ENCODE measurements at regions of chr2 and their contacts with region 1.

Region 1: GRCh38 chr2:100580367-100581276 is 17.8 kb downstream of the PDCL3 start:
- DNase-seq: peak; percentile 50
- H3K4me3 Mint-ChIP-seq: peak overlapping the region; percentile 66
- H3K27ac Mint-ChIP-seq: peak overlapping the region; percentile 91
- H3K4me1 Mint-ChIP-seq: peaks cover 44% of the 10 kb centered on the region
- H3K27me3 Mint-ChIP-seq: no peaks in the 10 kb centered on the region

Region 2: DNA sequence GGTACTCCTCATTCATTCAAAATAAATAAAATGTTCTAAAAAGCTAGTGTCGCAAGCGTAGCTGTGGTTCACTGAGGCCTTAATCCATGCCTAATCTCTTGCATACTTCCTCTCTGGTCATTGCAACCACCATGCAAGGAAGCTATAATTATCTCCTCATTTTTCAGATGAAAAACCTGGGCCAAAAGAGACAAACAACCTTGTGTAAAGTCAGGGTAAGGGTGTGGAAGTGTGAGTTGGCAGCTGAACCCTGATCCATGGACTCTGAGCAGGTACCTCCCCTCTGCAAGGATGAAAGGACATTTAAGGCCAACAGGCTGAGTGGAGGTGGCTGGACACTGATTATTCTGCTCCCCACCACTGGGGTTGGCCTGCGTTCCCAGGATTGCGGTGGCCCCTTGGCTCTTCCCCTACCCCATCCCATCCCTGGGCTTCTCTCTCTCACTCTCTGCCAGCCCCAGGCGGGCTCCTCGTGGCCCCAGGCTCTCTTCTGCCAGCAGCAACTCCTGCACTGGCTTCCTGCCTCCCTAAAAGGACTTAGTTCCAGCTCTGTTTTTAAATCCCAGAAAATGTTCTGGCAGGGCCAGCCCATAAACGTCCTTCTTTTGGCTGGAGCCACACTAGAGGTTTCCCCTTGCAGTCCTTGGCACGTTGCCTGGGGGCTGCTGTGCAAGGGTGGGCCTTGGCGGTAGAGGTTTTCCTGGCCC is 366.2 kb before region 1 on chr2:
- intact Hi-C with region 1: no loop called
- DNase-seq: no peak
- H3K4me3 Mint-ChIP-seq: no peak overlapping the region
- H3K27ac Mint-ChIP-seq: no peak overlapping the region
- H3K4me1 Mint-ChIP-seq: no peaks in the 10 kb centered on the region
- H3K27me3 Mint-ChIP-seq: peaks cover 5% of the 10 kb centered on the region

Region 3: DNA sequence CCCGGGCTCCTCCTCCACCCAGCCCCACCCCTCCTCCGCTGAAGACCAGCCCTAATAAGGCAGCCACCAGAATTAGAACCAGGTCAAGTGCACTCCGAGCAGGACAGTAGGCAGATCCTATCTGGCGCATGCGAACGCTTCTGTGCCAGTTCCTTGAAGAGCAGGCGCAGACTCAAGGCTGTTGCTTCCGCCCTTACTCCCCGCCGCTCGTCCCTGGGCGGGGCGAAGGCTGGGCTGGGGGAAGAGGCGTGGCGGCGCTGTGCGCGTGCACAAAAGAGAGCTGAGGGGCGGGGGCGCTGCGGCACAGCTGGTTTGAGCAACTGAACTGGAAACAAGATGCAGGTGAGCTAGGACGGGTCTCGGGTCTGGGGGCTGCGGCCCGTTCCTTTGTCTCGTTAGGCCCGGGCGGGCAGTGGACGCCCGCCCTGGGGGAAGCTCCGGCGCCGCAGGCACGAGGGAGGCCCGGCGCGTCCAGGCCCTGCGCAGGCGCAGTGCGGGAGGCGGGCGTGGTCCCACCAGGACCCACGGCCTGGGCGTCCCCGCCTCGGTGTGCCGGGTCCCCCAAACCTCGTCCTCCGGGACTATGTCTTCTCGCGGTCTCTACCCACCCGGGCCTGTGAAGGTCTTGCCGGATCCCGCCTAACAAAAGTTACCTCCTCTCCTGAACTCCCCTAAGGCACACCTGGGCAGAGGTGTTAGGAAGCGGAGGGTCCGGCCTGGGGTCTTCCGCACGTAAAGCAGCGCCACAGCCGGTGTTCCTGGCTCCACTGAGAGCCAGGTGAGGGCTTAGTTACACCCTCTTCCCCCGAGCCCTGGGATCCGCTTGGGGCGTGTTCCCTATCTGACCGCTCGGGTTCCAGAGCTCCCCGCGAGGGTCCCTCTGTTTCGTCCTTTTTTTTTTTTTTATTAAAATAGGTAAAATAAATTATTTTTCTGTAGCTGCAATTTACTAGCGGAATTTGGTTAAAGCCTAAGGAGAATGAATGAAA is 17.6 kb before region 1 on chr2 and contains the start of gene PDCL3:
- intact Hi-C with region 1: loop called (anchors 1 kb)
- DNase-seq: peak; percentile 94
- H3K4me3 Mint-ChIP-seq: peak within 1 kb of the TSS; percentile 88
- H3K27ac Mint-ChIP-seq: peak within 1 kb of the TSS; percentile 99
- H3K4me1 Mint-ChIP-seq: peaks cover 36% of the 10 kb centered on the region
- H3K27me3 Mint-ChIP-seq: no peaks in the 10 kb centered on the region
- total RNA-seq, gene PDCL3: 42.5 and 48.8 TPM in 2 replicates

Region 4: GRCh38 chr2:100630473-100630977 is 49.9 kb after region 1 on chr2:
- intact Hi-C with region 1: loop called (anchors 2 kb)
- DNase-seq: peak; percentile 53
- H3K4me3 Mint-ChIP-seq: peak overlapping the region; percentile 27
- H3K27ac Mint-ChIP-seq: peak overlapping the region; percentile 46
- H3K4me1 Mint-ChIP-seq: peaks cover 27% of the 10 kb centered on the region
- H3K27me3 Mint-ChIP-seq: peaks cover 9% of the 10 kb centered on the region

Region 5: DNA sequence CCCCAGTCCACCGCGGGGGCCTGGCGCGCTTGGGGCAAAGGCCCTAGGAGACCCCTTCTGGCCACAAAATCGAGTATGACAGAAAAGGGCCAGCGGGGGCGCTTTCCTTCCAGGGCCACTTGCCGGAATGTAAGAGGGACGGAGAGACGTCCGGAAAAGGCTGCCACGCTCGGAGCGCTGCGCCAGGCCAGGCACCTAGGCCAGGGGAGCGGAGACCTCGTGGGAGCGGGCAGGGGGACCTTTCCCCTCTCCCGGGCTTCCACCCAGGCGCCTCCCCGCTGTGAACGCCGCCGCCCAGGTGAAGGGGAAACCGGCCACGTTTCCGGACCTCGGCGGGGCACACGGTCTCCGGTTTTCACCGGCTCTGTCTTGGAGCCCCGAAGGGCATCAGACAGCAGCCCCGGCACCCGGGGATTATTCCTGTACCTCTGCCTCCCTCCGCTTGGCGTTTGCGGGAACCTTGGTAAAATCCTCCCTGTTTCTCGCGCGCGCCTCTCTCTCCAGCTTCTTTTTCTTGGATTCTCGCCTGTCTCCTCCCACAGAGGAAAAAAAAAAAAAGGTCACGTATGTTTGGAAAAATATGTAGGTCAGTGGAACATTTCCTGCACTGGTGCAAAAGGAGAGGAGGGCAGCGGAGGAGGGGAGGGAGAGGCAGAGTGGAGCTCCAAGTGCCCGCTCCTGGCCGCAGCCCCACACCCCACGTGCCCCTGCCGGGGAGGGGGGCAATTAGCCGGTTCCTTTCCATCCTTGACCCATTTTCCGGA is 238.2 kb after region 1 on chr2:
- intact Hi-C with region 1: loop called (anchors 10 kb)
- DNase-seq: no peak
- H3K4me3 Mint-ChIP-seq: peak overlapping the region; percentile 77
- H3K27ac Mint-ChIP-seq: peak overlapping the region; percentile 50
- H3K4me1 Mint-ChIP-seq: peaks cover 19% of the 10 kb centered on the region
- H3K27me3 Mint-ChIP-seq: peaks cover 46% of the 10 kb centered on the region

Measured in activated T-helper 2 cell treated with anti-CD3 and anti-CD28 coated beads, Interferon-gamma antibody, Interleukin-2, Interleukin-4, amounts not matched to agents 10 μg/mL and 5 μg/mL and 100 μg/mL, durations not matched to agents 14 hours and 24 hours and 36 hours (primary cell).